Activated CD4-positive, alpha-beta memory T cell treated with anti-CD3 and anti-CD28 coated beads, Interleukin-2, amount 10 ng/mL, durations not matched to agents 7 days and 5 days (primary cell): ENCODE measurements at regions of chr7 and their contacts with region 1.

Region 1: GRCh38 chr7:44986218-44987053 is 7.6 kb upstream of the MYO1G start:
- DNase-seq: peak; percentile 96
- H3K4me3 Mint-ChIP-seq: peak overlapping the region; percentile 99
- H3K27ac Mint-ChIP-seq: peak overlapping the region; percentile 96
- H3K4me1 Mint-ChIP-seq: peaks cover 73% of the 10 kb centered on the region
- H3K27me3 Mint-ChIP-seq: no peaks in the 10 kb centered on the region

Region 2: GRCh38 chr7:45033261-45033930 is 47.0 kb after region 1 on chr7:
- CTCF ChIA-PET with region 1: no interaction called
- POLR2A ChIA-PET with region 1: interaction called, 412 read pairs
- DNase-seq: peak; percentile 28
- H3K4me3 Mint-ChIP-seq: peak overlapping the region; percentile 55
- H3K27ac Mint-ChIP-seq: peak overlapping the region; percentile 79
- H3K4me1 Mint-ChIP-seq: peaks cover 78% of the 10 kb centered on the region
- H3K27me3 Mint-ChIP-seq: no peaks in the 10 kb centered on the region